ENCODE measurements at regions of chr9 and their contacts with region 1.

Region 1: GRCh38 chr9:34072868-34073590 is 24.3 kb upstream of the UBAP2 start:
- DNase-seq: no peak
- ATAC-seq: peak; percentile 56
- H3K4me3 ChIP-seq: no peak overlapping the region
- H3K27ac ChIP-seq: 0 out of 2 replicates have a peak overlapping the region, but pooled peaks have one; percentile 18
- H3K4me1 ChIP-seq: peaks cover 11% of the 10 kb centered on the region
- H3K27me3 ChIP-seq: no peaks in the 10 kb centered on the region
- CTCF ChIP-seq: no peak
- EP300 ChIP-seq: no peak
- POLR2A ChIP-seq: no peak
- RAD21 ChIP-seq: no peak

Region 2: GRCh38 chr9:33924978-33925797 is 147.8 kb before region 1 on chr9:
- CTCF ChIA-PET with region 1: interaction called, 28 read pairs
- POLR2A ChIA-PET with region 1: no interaction called
- RAD21 ChIA-PET with region 1: interaction called, 9 read pairs
- SMC1A ChIA-PET with region 1: interaction called, 12 read pairs
- in situ Hi-C with region 1: no loop called
- intact Hi-C with region 1: loop called (anchors 5 kb)
- DNase-seq: no peak
- ATAC-seq: peak; percentile 60
- H3K4me3 ChIP-seq: no peak overlapping the region
- H3K27ac ChIP-seq: no peak overlapping the region
- H3K4me1 ChIP-seq: no peaks in the 10 kb centered on the region
- H3K27me3 ChIP-seq: no peaks in the 10 kb centered on the region
- CTCF ChIP-seq: peak; percentile 38 to 57 (median 47); a peak in 5 of 6 replicates
- EP300 ChIP-seq: no peak
- POLR2A ChIP-seq: peak; percentile 31; the same call in 1 of the 2 replicates
- RAD21 ChIP-seq: peak; percentile 41

Region 3: GRCh38 chr9:33972698-33973097 is 100.3 kb before region 1 on chr9:
- CTCF ChIA-PET with region 1: interaction called, 11 read pairs
- POLR2A ChIA-PET with region 1: interaction called, 3 read pairs
- RAD21 ChIA-PET with region 1: no interaction called
- SMC1A ChIA-PET with region 1: no interaction called
- in situ Hi-C with region 1: no loop called
- intact Hi-C with region 1: no loop called
- DNase-seq: no peak
- ATAC-seq: no peak
- H3K4me3 ChIP-seq: no peak overlapping the region
- H3K27ac ChIP-seq: no peak overlapping the region
- H3K4me1 ChIP-seq: no peaks in the 10 kb centered on the region
- H3K27me3 ChIP-seq: no peaks in the 10 kb centered on the region
- CTCF ChIP-seq: no peak
- EP300 ChIP-seq: no peak
- POLR2A ChIP-seq: no peak
- RAD21 ChIP-seq: no peak

Region 4: GRCh38 chr9:34048923-34049697 is 23.9 kb before region 1 on chr9:
- CTCF ChIA-PET with region 1: interaction called, 21 read pairs
- POLR2A ChIA-PET with region 1: interaction called, 9 read pairs
- RAD21 ChIA-PET with region 1: interaction called, 4 read pairs
- SMC1A ChIA-PET with region 1: interaction called, 3 read pairs
- in situ Hi-C with region 1: no loop called
- intact Hi-C with region 1: no loop called
- DNase-seq: peak; percentile 95
- ATAC-seq: peak; percentile 86
- H3K4me3 ChIP-seq: peak overlapping the region; percentile 85
- H3K27ac ChIP-seq: peak overlapping the region; percentile 96
- H3K4me1 ChIP-seq: peaks cover 9% of the 10 kb centered on the region
- H3K27me3 ChIP-seq: no peaks in the 10 kb centered on the region
- CTCF ChIP-seq: no peak
- EP300 ChIP-seq: peak in 1 of 2 experiments; percentile 14; a peak in 1 of 4 replicates
- POLR2A ChIP-seq: peak; percentile 62
- RAD21 ChIP-seq: no peak

Region 5: DNA sequence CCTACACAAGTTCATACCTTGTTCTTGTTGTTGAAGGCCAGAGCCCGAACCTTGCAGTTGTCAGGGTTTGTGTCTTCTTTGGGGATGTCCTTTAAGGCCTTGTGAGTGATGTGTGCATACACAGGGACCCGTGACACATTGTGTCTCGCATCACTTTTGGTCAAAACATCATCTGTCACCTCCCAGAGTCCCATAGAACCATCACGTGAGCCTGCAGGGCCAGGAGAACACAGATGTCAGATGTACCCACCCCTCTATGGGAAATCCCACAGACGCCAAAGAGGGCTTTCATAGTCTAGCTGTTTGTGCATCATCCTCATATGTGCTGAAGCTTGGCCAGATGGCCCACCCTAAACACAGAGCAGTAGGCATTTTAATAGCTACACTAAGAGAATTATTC is 25.3 kb after region 1 on chr9:
- CTCF ChIA-PET with region 1: interaction called, 15 read pairs
- POLR2A ChIA-PET with region 1: no interaction called
- RAD21 ChIA-PET with region 1: interaction called, 3 read pairs
- SMC1A ChIA-PET with region 1: no interaction called
- in situ Hi-C with region 1: no loop called
- intact Hi-C with region 1: no loop called
- DNase-seq: peak; percentile 27
- ATAC-seq: peak; percentile 61
- H3K4me3 ChIP-seq: no peak overlapping the region
- H3K27ac ChIP-seq: peak overlapping the region; percentile 57
- H3K4me1 ChIP-seq: peaks cover 17% of the 10 kb centered on the region
- H3K27me3 ChIP-seq: no peaks in the 10 kb centered on the region
- CTCF ChIP-seq: no peak
- EP300 ChIP-seq: no peak
- POLR2A ChIP-seq: no peak
- RAD21 ChIP-seq: no peak